MCF 10A (cell line): ENCODE measurements at regions of chr3 and their contacts with region 1.

Region 1: GRCh38 chr3:69855436-69856162 is 116.3 kb downstream of the MITF start:
- DNase-seq: peak; percentile 31
- H3K4me3 Mint-ChIP-seq: no peak overlapping the region
- H3K27ac Mint-ChIP-seq: no peak overlapping the region
- H3K4me1 Mint-ChIP-seq: no peaks in the 10 kb centered on the region
- H3K27me3 Mint-ChIP-seq: no peaks in the 10 kb centered on the region
- CTCF ChIP-seq: peak; percentile 12

Region 2: GRCh38 chr3:69691860-69692259 is 163.7 kb before region 1 on chr3:
- CTCF ChIA-PET with region 1: interaction called, 74 read pairs
- POLR2A ChIA-PET with region 1: interaction called, 4 read pairs
- intact Hi-C with region 1: loop called (anchors 1 kb)
- DNase-seq: no peak
- H3K4me3 Mint-ChIP-seq: no peak overlapping the region
- H3K27ac Mint-ChIP-seq: no peak overlapping the region
- H3K4me1 Mint-ChIP-seq: peaks cover 6% of the 10 kb centered on the region
- H3K27me3 Mint-ChIP-seq: no peaks in the 10 kb centered on the region
- CTCF ChIP-seq: no peak

Region 3: DNA sequence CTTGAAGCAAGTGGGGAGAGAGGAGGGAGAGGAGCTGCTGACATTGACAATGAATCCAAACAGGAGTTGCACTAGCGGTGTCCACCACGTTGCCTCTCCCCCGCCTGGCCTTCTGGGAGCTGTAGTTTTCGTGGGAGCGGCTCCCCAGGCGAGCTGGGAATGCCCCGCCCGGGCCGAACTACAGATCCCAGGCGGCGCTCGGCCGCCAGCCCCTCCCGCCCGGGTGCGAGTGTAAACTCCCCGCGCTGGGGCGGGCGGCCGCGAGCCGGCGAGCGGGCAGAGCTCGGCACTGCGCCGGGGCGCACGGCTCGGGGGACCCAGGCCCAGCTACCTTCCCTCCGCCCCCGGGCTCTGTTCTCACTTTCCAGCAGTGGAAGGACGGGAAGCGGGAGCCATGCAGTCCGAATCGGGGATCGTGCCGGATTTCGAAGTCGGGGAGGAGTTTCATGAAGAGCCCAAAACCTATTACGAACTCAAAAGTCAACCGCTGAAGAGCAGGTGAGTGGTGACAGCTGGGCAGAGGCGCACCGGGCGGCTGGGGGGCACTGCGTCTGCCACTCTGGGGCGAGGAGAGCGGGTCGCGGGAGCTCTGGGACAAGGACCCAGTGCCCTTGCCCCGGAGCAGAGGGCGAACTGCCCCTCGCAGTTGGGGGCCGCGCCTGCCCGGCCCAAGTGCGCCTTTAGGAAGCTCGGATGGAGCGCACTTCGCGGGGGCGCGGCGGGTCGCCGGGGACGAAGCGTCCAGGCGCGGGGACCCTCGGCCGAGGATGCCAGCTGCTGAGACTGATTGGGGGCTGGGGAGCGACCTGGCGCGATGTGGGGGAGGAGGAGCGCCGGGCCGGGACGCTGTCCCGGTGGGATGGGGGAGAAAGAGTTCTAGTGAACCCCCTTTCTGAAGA is 116.1 kb before region 1 on chr3 and contains the start of gene MITF:
- CTCF ChIA-PET with region 1: interaction called, 14 read pairs
- POLR2A ChIA-PET with region 1: interaction called, 3 read pairs
- intact Hi-C with region 1: no loop called
- DNase-seq: peak; percentile 93
- H3K4me3 Mint-ChIP-seq: peak within 1 kb of the TSS; percentile 75
- H3K27ac Mint-ChIP-seq: peak within 1 kb of the TSS; percentile 70
- H3K4me1 Mint-ChIP-seq: peaks cover 13% of the 10 kb centered on the region
- H3K27me3 Mint-ChIP-seq: peaks cover 16% of the 10 kb centered on the region
- CTCF ChIP-seq: no peak
- total RNA-seq, gene MITF: 7.4 and 16.1 TPM in 2 replicates

Region 4: GRCh38 chr3:69821133-69821532 is 34.5 kb before region 1 on chr3:
- CTCF ChIA-PET with region 1: interaction called, 3 read pairs
- POLR2A ChIA-PET with region 1: no interaction called
- intact Hi-C with region 1: loop called (anchors 5 kb)
- DNase-seq: no peak
- H3K4me3 Mint-ChIP-seq: no peak overlapping the region
- H3K27ac Mint-ChIP-seq: no peak overlapping the region
- H3K4me1 Mint-ChIP-seq: no peaks in the 10 kb centered on the region
- H3K27me3 Mint-ChIP-seq: no peaks in the 10 kb centered on the region
- CTCF ChIP-seq: no peak

Region 5: DNA sequence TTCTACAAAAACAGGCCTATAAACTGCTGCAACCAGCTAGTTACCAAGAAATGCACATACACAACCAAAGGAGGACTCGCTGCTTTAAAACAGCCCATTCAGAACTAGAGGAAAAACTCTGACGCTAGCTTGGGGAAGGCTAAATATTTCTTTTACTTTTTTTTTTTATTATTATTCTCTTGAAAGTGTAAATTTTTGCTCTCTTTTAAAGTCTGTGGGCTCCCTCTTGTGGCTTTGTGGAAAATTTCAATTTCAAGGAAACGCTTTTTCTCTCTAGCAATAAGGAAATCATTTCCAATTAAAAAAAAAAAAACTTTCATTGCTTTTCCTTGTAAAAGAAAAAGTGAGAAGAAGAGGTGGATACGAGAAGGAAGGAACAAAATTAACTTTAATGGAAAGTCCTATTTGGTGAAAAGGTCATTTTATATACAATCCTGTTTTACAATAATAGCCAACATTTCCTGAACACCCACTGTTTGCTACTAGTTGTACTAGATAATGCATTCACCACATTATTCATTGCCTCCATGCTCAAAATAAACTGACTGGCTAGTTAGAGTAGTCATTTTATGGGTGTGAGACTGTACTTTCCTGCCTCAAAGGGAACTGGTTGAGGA is 92.8 kb after region 1 on chr3:
- CTCF ChIA-PET with region 1: interaction called, 13 read pairs
- POLR2A ChIA-PET with region 1: no interaction called
- intact Hi-C with region 1: no loop called
- DNase-seq: peak; percentile 59
- H3K4me3 Mint-ChIP-seq: no peak overlapping the region
- H3K27ac Mint-ChIP-seq: no peak overlapping the region
- H3K4me1 Mint-ChIP-seq: no peaks in the 10 kb centered on the region
- H3K27me3 Mint-ChIP-seq: no peaks in the 10 kb centered on the region
- CTCF ChIP-seq: peak; percentile 58

Region 6: GRCh38 chr3:70028361-70028760 is 172.8 kb after region 1 on chr3:
- CTCF ChIA-PET with region 1: no interaction called
- POLR2A ChIA-PET with region 1: no interaction called
- intact Hi-C with region 1: no loop called
- DNase-seq: no peak
- H3K4me3 Mint-ChIP-seq: no peak overlapping the region
- H3K27ac Mint-ChIP-seq: no peak overlapping the region
- H3K4me1 Mint-ChIP-seq: no peaks in the 10 kb centered on the region
- H3K27me3 Mint-ChIP-seq: peaks cover 82% of the 10 kb centered on the region
- CTCF ChIP-seq: no peak